ENCODE measurements at regions of chr5 and their contacts with region 1.

Region 1: DNA sequence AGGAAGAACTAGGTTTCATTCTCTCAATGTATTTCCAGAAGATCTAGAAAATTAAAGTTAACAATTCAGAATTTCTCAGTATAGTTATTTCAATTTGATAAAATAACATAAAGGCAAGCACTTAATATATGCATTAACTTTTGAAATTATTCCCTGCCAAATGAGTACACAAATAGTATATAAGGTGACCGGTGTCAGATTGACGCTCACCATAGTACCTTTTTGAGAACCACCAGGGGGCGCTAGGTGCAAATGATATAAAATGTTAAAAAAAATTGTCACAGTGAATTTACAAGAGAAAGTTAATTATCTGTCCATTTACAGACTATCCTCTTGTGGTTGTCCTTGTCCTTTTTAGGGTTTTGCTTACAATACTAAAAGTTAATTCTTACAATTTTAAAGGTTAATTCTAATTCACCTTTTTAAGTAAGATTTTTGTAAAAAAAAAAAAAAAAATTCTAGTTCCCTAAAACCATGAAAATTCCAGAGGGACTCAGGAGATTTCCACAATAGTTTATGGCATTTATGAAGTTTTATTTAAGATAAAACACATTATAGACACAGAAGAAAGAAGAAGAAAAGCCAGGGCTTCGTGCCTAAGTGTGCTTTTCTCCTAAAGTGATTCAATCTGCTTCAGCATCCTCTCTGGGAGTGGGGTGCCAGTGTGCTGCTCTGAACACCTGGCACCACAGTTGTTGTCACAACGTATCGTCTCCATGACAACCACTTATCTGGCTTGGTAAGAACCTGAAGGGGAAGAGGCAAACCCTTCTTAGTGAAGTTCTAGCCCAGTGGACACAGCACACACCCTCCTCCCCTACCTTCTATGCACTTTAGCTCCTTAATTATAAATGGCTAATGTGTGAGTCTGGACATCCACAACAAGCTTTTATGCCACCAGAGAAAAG is 1.7 kb downstream of the ADAMTS16 start:
- DNase-seq: no peak
- H3K4me3 ChIP-seq: peak overlapping the region in 3 of 4 donors; percentile 42 to 57 (median 47)
- H3K27ac ChIP-seq: no peak overlapping the region
- H3K4me1 ChIP-seq: peaks cover 20 to 24% (median 23%) of the 10 kb centered on the region in 4 donors
- H3K27me3 ChIP-seq: peaks cover 0 to 58% (median 20%) of the 10 kb centered on the region in 4 donors
- CTCF ChIP-seq: peak; percentile 62 to 80 (median 71)
- EP300 ChIP-seq: no peak
- POLR2A ChIP-seq: no peak

Region 2: DNA sequence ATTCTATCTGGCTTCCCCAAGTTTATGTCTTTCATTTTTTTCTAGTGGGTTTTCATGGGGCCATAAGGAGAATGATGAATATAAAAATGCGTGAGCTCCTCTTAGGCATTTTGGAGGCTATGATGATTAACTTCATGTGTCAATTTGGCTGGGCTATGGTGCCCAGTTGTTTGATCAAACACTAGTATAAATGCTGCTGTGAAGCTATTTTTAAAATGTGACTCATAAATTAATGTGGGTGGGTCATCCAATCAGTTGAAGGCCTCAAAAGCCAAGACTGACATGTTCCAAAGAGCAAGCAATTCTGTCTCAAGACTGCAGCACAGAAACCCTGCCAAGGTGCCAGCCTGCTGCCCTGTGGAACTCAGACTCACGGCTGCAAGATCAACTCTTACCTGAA is 256.2 kb after region 1 on chr5:
- intact Hi-C with region 1: loop called (anchors 2 kb)
- DNase-seq: no peak
- H3K4me3 ChIP-seq: no peak overlapping the region
- H3K27ac ChIP-seq: no peak overlapping the region
- H3K4me1 ChIP-seq: no peaks in the 10 kb centered on the region
- H3K27me3 ChIP-seq: no peaks in the 10 kb centered on the region
- CTCF ChIP-seq: no peak
- EP300 ChIP-seq: no peak
- POLR2A ChIP-seq: no peak

Region 3: GRCh38 chr5:5585751-5586341 is 444.0 kb after region 1 on chr5:
- intact Hi-C with region 1: no loop called
- DNase-seq: peak; percentile 87
- H3K4me3 ChIP-seq: no peak overlapping the region
- H3K27ac ChIP-seq: peak overlapping the region in 2 of 4 donors; percentile 26 to 45
- H3K4me1 ChIP-seq: peaks cover 0 to 29% (median 22%) of the 10 kb centered on the region in 4 donors
- H3K27me3 ChIP-seq: no peaks in the 10 kb centered on the region
- CTCF ChIP-seq: no peak
- EP300 ChIP-seq: no peak
- POLR2A ChIP-seq: no peak